Testis (tissue), 5 donors: ENCODE measurements at regions of chr11 and their contacts with region 1.

Region 1: GRCh38 chr11:86477495-86478155 is 102.9 kb downstream of the CCDC81 start:
- DNase-seq: peak; percentile 65
- H3K4me3 ChIP-seq: no peak overlapping the region
- H3K27ac ChIP-seq: peak overlapping the region; percentile 29 to 80
- H3K4me1 ChIP-seq: peaks cover 41% of the 10 kb centered on the region
- H3K27me3 ChIP-seq: no peaks in the 10 kb centered on the region
- CTCF ChIP-seq: no peak
- POLR2A ChIP-seq: no peak

Region 2: GRCh38 chr11:86515297-86516094 is 37.9 kb after region 1 on chr11:
- intact Hi-C with region 1: loop called (anchors 5 kb)
- DNase-seq: no peak
- H3K4me3 ChIP-seq: no peak overlapping the region
- H3K27ac ChIP-seq: no peak overlapping the region
- H3K4me1 ChIP-seq: peaks cover 27% of the 10 kb centered on the region
- H3K27me3 ChIP-seq: no peaks in the 10 kb centered on the region
- CTCF ChIP-seq: no peak
- POLR2A ChIP-seq: no peak